ENCODE measurements at regions of chr2 and their contacts with region 1.

Region 1: DNA sequence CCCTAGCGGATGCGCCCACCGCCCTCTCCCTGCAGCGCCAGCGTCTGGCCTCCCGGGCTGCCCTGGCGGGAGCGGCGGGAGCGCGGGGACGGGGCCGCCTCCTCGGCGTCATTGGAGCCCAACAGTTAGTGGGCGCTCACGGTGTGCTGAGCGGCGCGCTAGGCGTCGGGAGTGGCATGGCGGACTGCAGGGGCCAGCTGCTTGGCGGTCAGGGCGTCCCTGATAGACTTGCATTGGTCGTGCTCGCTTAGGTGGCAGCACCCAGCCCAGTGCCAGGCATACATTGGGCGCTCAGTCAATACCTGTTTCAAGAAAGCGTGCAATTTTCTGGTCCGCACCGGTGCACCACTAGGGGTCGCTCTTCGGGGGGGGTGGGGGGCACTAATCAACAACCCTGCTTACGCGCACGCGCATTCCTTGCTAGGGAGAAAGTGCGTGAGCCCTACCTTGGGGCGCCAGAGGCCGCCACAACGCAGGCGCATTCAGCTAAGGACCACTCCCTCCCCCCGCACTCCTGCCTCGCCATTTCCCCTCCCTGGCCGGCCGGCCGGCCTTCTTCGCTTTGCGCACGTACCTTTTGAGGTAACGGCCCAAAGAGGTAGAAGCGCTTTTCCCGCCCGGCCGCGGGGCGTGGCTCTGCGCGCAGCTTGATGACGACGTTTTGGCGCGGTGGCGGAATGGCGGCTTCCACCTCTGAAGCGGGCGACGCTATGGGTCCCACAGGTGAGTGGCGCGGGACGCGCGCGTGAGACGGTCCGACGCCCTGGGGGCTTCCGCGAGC is 411 bp upstream of the MZT2A start:
- DNase-seq: peak; percentile 91 to 98
- ATAC-seq: peak; percentile 74 to 91 (median 81)
- H3K4me3 ChIP-seq: peak overlapping the region; percentile 71
- H3K4me3 Mint-ChIP-seq: peak overlapping the region; percentile 95
- H3K27ac ChIP-seq: peak overlapping the region; percentile 90
- H3K27ac Mint-ChIP-seq: peak overlapping the region; percentile 93 to 95
- H3K4me1 ChIP-seq: peaks cover 34% of the 10 kb centered on the region
- H3K4me1 Mint-ChIP-seq: peaks cover 25 to 44% of the 10 kb centered on the region in 2 donors
- H3K27me3 ChIP-seq: no peaks in the 10 kb centered on the region
- H3K27me3 Mint-ChIP-seq: no peaks in the 10 kb centered on the region
- CTCF ChIP-seq: peak; percentile 91

Region 2: DNA sequence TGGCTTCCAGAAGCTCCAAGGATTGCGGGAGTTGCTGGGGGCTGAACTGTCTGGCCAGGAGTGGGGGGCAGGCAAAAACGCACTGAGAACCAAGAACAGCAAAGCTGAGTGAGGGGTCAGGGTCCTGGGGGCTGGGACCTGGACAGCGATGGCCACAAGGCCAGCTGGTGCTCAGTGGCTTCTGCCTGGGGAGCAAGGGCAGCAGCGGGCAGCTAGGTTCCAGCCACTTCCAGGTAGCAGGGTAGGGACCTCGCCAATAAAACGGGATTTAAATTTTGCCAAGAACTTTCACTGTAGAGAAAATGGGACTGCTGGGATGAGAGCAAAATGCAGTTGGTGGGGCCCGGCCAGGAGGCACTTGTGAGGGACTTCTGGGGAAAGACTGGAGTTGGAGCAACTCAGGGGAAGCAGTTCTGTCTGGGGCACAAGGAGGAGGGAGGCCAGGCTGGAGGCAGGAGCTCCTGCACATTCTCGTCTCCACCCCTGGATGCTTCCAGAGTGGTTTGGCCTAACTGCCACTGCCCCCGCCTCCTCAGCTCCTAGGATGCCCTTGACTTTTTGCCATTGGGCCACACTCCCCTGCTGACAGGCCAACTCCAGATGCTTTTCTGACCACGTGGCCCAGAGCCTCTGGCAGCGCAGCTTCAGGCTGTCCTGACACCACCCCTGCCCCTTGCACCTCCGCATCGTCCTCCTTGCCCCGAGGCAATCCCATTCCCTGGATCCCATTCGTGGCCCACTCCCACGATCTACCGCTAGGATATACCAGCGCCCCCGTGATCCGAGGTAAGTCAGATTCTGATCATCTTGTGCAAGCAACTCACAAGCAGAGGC is 29.6 kb after region 1 on chr2:
- intact Hi-C with region 1: loop called (anchors 2 kb)
- DNase-seq: no peak
- ATAC-seq: no peak
- H3K4me3 ChIP-seq: no peak overlapping the region
- H3K4me3 Mint-ChIP-seq: no peak overlapping the region
- H3K27ac ChIP-seq: no peak overlapping the region
- H3K27ac Mint-ChIP-seq: peak overlapping the region in 1 of 2 donors; percentile 26
- H3K4me1 ChIP-seq: peaks cover 2% of the 10 kb centered on the region
- H3K4me1 Mint-ChIP-seq: no peaks in the 10 kb centered on the region
- H3K27me3 ChIP-seq: no peaks in the 10 kb centered on the region
- H3K27me3 Mint-ChIP-seq: no peaks in the 10 kb centered on the region
- CTCF ChIP-seq: no peak